ENCODE measurements at regions of chr3 and their contacts with region 1.

Region 1: GRCh38 chr3:101791778-101792177 is 12.8 kb downstream of the NXPE3 start:
- DNase-seq: peak; percentile 79
- H3K4me3 ChIP-seq: peak overlapping the region; percentile 49
- H3K27ac ChIP-seq: peak overlapping the region; percentile 93
- H3K4me1 ChIP-seq: peaks cover 54% of the 10 kb centered on the region
- CTCF ChIP-seq: no peak

Region 2: GRCh38 chr3:101433653-101434052 is 358.1 kb before region 1 on chr3:
- CTCF ChIA-PET with region 1: no interaction called
- POLR2A ChIA-PET with region 1: no interaction called
- intact Hi-C with region 1: no loop called
- DNase-seq: no peak
- H3K4me3 ChIP-seq: no peak overlapping the region
- H3K27ac ChIP-seq: no peak overlapping the region
- H3K4me1 ChIP-seq: no peaks in the 10 kb centered on the region
- CTCF ChIP-seq: no peak

Region 3: GRCh38 chr3:101625879-101626278 is 165.9 kb before region 1 on chr3:
- CTCF ChIA-PET with region 1: no interaction called
- POLR2A ChIA-PET with region 1: no interaction called
- intact Hi-C with region 1: no loop called
- DNase-seq: no peak
- H3K4me3 ChIP-seq: no peak overlapping the region
- H3K27ac ChIP-seq: no peak overlapping the region
- H3K4me1 ChIP-seq: no peaks in the 10 kb centered on the region
- CTCF ChIP-seq: no peak

Region 4: GRCh38 chr3:101779047-101779821 is 12.5 kb before region 1 on chr3 and contains the start of gene NXPE3:
- CTCF ChIA-PET with region 1: interaction called, 3 read pairs
- POLR2A ChIA-PET with region 1: interaction called, 13 read pairs
- intact Hi-C with region 1: loop called (anchors 1 kb)
- DNase-seq: peak; percentile 92
- H3K4me3 ChIP-seq: peak within 1 kb of the TSS; percentile 77
- H3K27ac ChIP-seq: peak within 1 kb of the TSS; percentile 87
- H3K4me1 ChIP-seq: peaks cover 62% of the 10 kb centered on the region
- CTCF ChIP-seq: no peak
- total RNA-seq, gene NXPE3: 16.7 and 17.9 TPM in 2 replicates

Region 5: GRCh38 chr3:101803173-101803782 is 11.5 kb after region 1 on chr3:
- CTCF ChIA-PET with region 1: interaction called, 3 read pairs
- POLR2A ChIA-PET with region 1: interaction called, 15 read pairs
- intact Hi-C with region 1: no loop called
- DNase-seq: peak; percentile 89
- H3K4me3 ChIP-seq: no peak overlapping the region
- H3K27ac ChIP-seq: no peak overlapping the region
- H3K4me1 ChIP-seq: peaks cover 5% of the 10 kb centered on the region
- CTCF ChIP-seq: peak; percentile 99

Measured in OCI-LY7 (cell line).